Head of caudate nucleus (tissue), 42 donors: ENCODE measurements at regions of chr4 and their contacts with region 1.

Region 1: GRCh38 chr4:1746265-1746691 is 25.0 kb downstream of the TACC3 start:
- DNase-seq: peak; percentile 38 to 87 (median 70)

Region 2: DNA sequence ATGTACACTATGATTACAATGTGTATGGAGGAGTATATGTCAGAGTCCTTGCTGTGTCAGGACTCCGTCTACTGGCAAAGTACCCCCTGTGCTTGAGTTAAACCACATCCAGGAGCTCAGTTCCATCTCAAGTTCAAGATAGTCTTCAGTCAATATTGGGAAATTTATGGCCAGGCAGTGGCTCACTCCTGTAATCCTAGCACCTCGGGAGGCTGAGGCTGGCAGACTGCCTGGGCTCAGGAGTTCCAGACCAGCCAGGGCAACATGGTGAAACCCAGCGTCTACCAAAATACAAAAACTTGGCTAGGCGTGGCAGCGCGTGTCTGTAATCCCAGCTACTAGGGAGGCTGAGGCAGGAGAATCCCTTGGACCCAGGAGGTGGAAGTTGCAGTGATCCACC is 39.9 kb before region 1 on chr4:
- intact Hi-C with region 1: no loop called
- DNase-seq: no peak

Region 3: GRCh38 chr4:1809754-1810511 is 63.7 kb after region 1 on chr4:
- intact Hi-C with region 1: loop called (anchors 5 kb)
- DNase-seq: peak in 41 of 42 donors; percentile 59 to 90 (median 78)